ENCODE measurements at regions of chr2 and their contacts with region 1.

Region 1: GRCh38 chr2:121596221-121597080 is 52.8 kb downstream of the CLASP1 start:
- DNase-seq: peak; percentile 75
- H3K4me3 ChIP-seq: peak overlapping the region; percentile 25
- H3K27ac ChIP-seq: peak overlapping the region; percentile 86
- H3K4me1 ChIP-seq: peaks cover 19% of the 10 kb centered on the region
- H3K27me3 ChIP-seq: no peaks in the 10 kb centered on the region
- CTCF ChIP-seq: peak; percentile 76

Region 2: GRCh38 chr2:121363632-121364420 is 232.6 kb before region 1 on chr2:
- CTCF ChIA-PET with region 1: no interaction called
- POLR2A ChIA-PET with region 1: no interaction called
- intact Hi-C with region 1: no loop called
- DNase-seq: no peak
- H3K4me3 ChIP-seq: no peak overlapping the region
- H3K27ac ChIP-seq: no peak overlapping the region
- H3K4me1 ChIP-seq: no peaks in the 10 kb centered on the region
- H3K27me3 ChIP-seq: no peaks in the 10 kb centered on the region
- CTCF ChIP-seq: no peak

Region 3: GRCh38 chr2:121539750-121540469 is 56.5 kb before region 1 on chr2:
- CTCF ChIA-PET with region 1: no interaction called
- POLR2A ChIA-PET with region 1: no interaction called
- intact Hi-C with region 1: no loop called
- DNase-seq: no peak
- H3K4me3 ChIP-seq: no peak overlapping the region
- H3K27ac ChIP-seq: no peak overlapping the region
- H3K4me1 ChIP-seq: no peaks in the 10 kb centered on the region
- H3K27me3 ChIP-seq: no peaks in the 10 kb centered on the region
- CTCF ChIP-seq: no peak

Region 4: GRCh38 chr2:121698318-121698930 is 102.0 kb after region 1 on chr2:
- CTCF ChIA-PET with region 1: no interaction called
- POLR2A ChIA-PET with region 1: interaction called, 26 read pairs
- intact Hi-C with region 1: no loop called
- DNase-seq: no peak
- H3K4me3 ChIP-seq: no peak overlapping the region
- H3K27ac ChIP-seq: no peak overlapping the region
- H3K4me1 ChIP-seq: peaks cover 9% of the 10 kb centered on the region
- H3K27me3 ChIP-seq: no peaks in the 10 kb centered on the region
- CTCF ChIP-seq: no peak

Region 5: DNA sequence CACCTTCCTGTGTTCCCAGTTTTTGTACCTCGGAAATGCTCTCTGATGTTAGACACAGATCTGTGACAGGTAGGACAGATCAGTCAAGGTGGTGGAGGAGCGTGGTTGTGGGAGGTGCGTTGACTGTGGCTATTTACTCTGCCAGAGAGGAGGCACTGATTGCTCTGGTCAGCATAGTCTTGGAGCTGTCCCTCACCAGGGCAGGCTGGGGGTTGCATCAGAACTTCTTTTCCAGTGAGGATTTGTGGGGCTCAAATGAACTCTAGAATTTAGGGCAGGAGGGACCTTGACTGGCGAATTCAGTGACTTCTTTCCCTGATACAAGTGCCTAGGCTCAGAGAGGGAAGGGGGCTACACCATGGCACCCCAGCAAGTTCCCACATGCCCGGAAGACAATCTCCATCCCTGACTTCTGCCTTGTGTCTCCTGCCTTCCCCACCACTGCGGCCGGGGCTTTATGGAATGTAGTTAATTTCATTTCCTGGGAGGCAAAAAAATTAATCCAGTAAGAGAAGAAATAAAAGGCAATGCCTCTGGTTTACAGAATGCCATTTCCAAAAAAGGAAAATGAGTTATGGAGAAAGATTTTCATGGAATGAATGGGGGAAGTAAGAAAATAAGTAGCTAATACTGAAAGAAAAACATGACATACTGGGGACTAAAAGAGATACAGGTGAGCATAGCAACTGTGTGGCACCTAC is 114.2 kb after region 1 on chr2:
- CTCF ChIA-PET with region 1: no interaction called
- POLR2A ChIA-PET with region 1: no interaction called
- intact Hi-C with region 1: loop called (anchors 10 kb)
- DNase-seq: no peak
- H3K4me3 ChIP-seq: no peak overlapping the region
- H3K27ac ChIP-seq: no peak overlapping the region
- H3K4me1 ChIP-seq: peaks cover 5% of the 10 kb centered on the region
- H3K27me3 ChIP-seq: no peaks in the 10 kb centered on the region
- CTCF ChIP-seq: no peak

Measured in A673 (cell line).